Right ventricle myocardium superior (tissue), 1 donor: ENCODE measurements at regions of chr6 and their contacts with region 1.

Region 1: DNA sequence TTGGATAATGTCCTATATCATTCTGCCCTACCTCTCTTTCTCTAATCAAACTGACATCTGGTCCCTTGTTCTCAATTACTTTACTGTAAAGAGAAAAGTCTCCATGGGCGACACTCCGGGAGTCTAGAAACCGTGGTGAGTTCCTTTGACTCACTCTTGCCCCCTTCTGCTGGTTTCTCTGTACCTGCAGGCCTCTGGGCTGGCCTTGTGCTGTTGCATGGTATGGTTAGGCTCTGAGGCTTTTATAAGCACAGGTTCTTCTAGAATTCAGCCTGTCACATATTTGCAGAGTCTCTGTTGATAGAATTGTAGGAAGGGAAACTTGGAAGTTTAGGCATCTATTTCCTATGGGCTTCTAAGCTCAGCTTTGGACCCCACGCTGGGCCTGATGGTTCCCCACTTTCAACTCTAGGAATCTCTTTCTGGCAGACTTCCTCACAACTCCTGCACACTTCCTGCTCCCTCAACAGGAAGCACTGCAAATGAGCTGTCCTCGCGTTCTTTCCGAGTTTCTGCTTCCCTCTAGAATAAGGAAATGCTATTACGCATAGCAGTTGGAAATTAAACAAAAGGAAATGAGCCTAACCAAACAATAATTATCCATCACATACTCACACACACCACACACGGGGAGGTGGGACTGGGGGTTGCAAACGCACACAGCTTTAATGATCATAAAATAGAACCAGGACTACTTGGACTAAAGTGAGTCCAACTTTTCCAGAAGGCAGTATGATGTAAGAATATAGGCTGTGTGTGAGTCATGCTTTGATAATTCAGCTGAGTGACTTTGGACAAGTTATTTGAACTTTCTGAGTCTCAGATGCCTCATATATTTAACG is 683.3 kb downstream of the QKI start:
- DNase-seq: no peak
- ATAC-seq: peak; percentile 43

Region 2: DNA sequence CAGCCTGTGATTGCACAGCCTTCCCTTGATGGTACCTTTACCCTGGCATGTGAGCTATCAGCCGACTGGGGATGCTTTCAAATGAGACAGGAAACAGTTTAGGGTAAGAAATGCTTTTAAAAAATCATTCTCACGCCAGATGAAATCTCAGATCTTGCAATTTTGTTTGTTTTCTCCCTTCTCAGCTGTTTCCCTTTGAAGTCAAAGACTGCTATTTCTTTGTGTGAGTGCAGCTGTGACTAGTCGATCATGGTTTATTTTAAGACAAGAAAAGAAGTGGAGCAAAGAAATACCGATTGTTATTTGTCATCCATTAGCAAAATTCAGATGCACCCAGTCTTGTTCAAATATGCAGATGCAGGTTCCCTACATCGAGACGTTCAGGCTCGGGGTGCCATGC is 193.6 kb before region 1 on chr6:
- intact Hi-C with region 1: no loop called
- DNase-seq: no peak
- ATAC-seq: no peak

Region 3: DNA sequence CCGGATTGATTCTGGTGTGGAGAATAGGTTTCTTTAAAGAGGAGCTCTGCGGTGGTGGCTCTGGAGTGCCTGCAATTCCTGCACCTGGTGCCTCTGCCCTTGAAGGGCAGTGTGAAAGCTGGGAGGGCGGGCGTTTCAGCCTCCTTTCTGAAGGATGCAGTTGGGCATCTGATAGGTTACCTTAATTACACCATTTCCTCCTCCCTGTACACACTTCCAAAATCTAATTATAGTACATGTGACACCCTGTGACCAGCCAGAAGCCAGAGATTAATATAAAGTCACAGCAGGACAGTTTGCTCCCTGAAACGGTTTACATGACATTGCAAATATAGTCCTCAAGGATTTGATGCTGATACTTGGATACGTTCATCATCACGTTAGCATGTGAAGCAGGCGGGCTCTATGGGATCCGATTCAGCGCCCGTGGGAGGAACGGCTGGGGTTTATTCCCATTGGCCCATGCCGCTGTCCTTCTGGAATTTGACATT is 135.1 kb before region 1 on chr6:
- intact Hi-C with region 1: loop called (anchors 2 kb)
- DNase-seq: peak; percentile 80
- ATAC-seq: peak; percentile 76